Breast epithelium (tissue), 4 donors: ENCODE measurements at regions of chr7 and their contacts with region 1.

Region 1: GRCh38 chr7:151368136-151368571 is 26.5 kb downstream of the NUB1 start:
- DNase-seq: peak; percentile 76 to 78
- H3K4me3 ChIP-seq: no peak overlapping the region
- H3K27ac ChIP-seq: no peak overlapping the region
- H3K4me1 ChIP-seq: no peaks in the 10 kb centered on the region
- H3K27me3 ChIP-seq: no peaks in the 10 kb centered on the region
- CTCF ChIP-seq: peak; percentile 93 to 94 (median 93)
- POLR2A ChIP-seq: no peak

Region 2: GRCh38 chr7:150466477-150466876 is 901.7 kb before region 1 on chr7:
- intact Hi-C with region 1: no loop called
- DNase-seq: no peak
- H3K4me3 ChIP-seq: peak overlapping the region in 1 of 3 donors; percentile 50
- H3K27ac ChIP-seq: peak overlapping the region in 1 of 2 donors; percentile 68
- H3K4me1 ChIP-seq: no peaks in the 10 kb centered on the region
- H3K27me3 ChIP-seq: no peaks in the 10 kb centered on the region
- CTCF ChIP-seq: no peak
- POLR2A ChIP-seq: no peak

Region 3: GRCh38 chr7:151339651-151340382 is 28.3 kb before region 1 on chr7:
- intact Hi-C with region 1: no loop called
- DNase-seq: no peak
- H3K4me3 ChIP-seq: peak overlapping the region in 1 of 3 donors; percentile 27
- H3K27ac ChIP-seq: peak overlapping the region; percentile 48 to 87
- H3K4me1 ChIP-seq: peaks cover 0 to 11% of the 10 kb centered on the region in 2 donors
- H3K27me3 ChIP-seq: no peaks in the 10 kb centered on the region
- CTCF ChIP-seq: no peak
- POLR2A ChIP-seq: no peak

Region 4: DNA sequence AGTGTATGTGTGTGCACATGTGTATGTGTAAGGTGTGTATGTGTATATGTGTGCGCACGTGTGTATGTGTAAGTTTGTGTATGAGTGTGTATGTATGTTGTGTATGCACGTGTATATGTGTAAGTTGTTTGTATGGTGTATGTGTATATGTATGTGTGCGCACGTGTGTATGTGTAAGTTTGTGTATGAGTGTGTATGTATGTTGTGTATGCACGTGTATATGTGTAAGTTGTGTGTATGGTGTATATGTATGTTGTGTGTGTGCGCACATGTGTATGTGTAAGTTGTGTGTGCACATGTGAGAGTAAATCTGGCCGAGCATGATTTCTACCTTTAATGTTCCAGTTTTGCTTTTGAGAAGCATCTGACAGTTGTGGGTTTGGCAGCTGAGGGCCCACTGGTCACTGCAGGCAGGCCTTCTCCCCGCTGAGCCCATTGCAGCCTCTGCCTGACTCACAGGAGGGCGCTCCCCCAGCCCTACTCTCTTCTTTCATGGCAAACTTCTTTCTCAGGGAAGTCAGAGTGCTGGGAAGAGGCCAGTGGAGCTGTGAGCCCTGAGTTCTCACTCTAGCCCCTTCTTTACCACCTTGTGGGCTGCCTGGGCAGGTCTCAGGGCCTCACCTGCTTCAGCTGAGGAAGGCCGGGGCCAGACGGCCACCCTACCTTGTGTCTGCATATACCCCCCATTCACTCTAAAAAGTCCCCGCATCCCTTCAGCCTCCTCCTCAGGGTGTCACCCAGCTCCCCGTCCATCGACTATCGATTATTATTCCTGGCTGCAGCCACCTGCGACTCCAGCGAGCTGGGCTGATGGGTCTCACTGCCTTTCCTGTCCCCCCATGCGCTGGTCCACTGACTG is 30.5 kb after region 1 on chr7:
- intact Hi-C with region 1: loop called (anchors 2 kb)
- DNase-seq: no peak
- H3K4me3 ChIP-seq: no peak overlapping the region
- H3K27ac ChIP-seq: peak overlapping the region in 1 of 2 donors; percentile 52
- H3K4me1 ChIP-seq: no peaks in the 10 kb centered on the region
- H3K27me3 ChIP-seq: no peaks in the 10 kb centered on the region
- CTCF ChIP-seq: no peak
- POLR2A ChIP-seq: no peak

Region 5: GRCh38 chr7:151437851-151438516 is 69.8 kb after region 1 on chr7:
- intact Hi-C with region 1: no loop called
- DNase-seq: no peak
- H3K4me3 ChIP-seq: no peak overlapping the region
- H3K27ac ChIP-seq: peak overlapping the region; percentile 78 to 88
- H3K4me1 ChIP-seq: peaks cover 10 to 17% of the 10 kb centered on the region in 2 donors
- H3K27me3 ChIP-seq: no peaks in the 10 kb centered on the region
- CTCF ChIP-seq: no peak
- POLR2A ChIP-seq: no peak

Region 6: GRCh38 chr7:151448261-151449252 is 80.4 kb after region 1 on chr7:
- intact Hi-C with region 1: loop called (anchors 5 kb)
- DNase-seq: peak; percentile 44 to 48
- H3K4me3 ChIP-seq: peak overlapping the region; percentile 47 to 77 (median 53)
- H3K27ac ChIP-seq: peak overlapping the region; percentile 24 to 56
- H3K4me1 ChIP-seq: no peaks in the 10 kb centered on the region
- H3K27me3 ChIP-seq: no peaks in the 10 kb centered on the region
- CTCF ChIP-seq: peak; percentile 26 to 88 (median 87)
- POLR2A ChIP-seq: no peak

Region 7: DNA sequence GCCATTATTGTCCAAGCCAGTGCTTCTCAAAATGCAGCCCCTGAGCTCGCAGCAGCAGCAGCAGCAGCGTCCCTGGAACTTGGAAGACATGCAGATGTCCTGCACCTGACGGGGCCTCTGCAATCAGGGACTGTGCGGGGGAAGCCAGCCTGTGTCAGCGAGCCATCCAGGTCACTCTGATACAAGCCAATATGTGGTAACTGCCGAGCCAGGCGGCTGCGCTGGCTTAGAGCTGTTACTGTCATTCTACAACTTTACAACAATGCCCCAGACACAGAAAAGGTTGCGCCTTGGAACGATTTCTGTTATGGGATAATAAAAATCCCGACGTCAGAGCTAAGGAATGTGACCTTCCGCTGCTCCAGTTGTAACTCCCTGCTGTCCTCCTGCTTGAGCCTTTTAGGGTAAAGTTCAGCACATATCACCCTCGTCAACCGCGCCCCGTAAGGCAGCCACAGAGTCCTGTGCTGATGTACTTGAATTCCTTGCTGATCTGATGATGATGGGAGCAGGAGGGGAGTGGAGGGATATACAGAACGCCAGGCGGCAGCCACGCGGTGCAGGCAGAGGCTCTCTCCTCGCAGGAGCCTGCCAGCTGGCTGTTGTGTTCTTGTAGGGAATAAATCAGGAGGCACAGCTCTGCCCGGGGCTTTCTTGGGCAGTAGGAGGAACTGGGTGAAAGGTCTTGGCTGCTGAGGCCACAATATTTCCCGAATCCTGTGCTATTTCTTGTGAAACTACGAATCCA is 91.7 kb after region 1 on chr7:
- intact Hi-C with region 1: loop called (anchors 5 kb)
- DNase-seq: peak; percentile 81 to 96
- H3K4me3 ChIP-seq: peak overlapping the region in 2 of 3 donors; percentile 30 to 40
- H3K27ac ChIP-seq: peak overlapping the region; percentile 95
- H3K4me1 ChIP-seq: peaks cover 0 to 9% of the 10 kb centered on the region in 2 donors
- H3K27me3 ChIP-seq: no peaks in the 10 kb centered on the region
- CTCF ChIP-seq: peak in 2 of 3 donors; percentile 23 to 29
- POLR2A ChIP-seq: no peak